ENCODE measurements at regions of chr15 and their contacts with region 1.

Region 1: GRCh38 chr15:35519541-35520149 is 26.3 kb downstream of the DPH6 start:
- DNase-seq: no peak
- H3K4me3 ChIP-seq: no peak overlapping the region
- H3K27ac ChIP-seq: no peak overlapping the region
- H3K4me1 ChIP-seq: no peaks in the 10 kb centered on the region
- H3K27me3 ChIP-seq: no peaks in the 10 kb centered on the region
- CTCF ChIP-seq: peak in 3 of 4 experiments; percentile 48 to 65 (median 61)
- POLR2A ChIP-seq: no peak

Region 2: GRCh38 chr15:35194296-35194695 is 325.3 kb before region 1 on chr15:
- intact Hi-C with region 1: no loop called
- DNase-seq: no peak
- H3K4me3 ChIP-seq: no peak overlapping the region
- H3K27ac ChIP-seq: no peak overlapping the region
- H3K4me1 ChIP-seq: no peaks in the 10 kb centered on the region
- H3K27me3 ChIP-seq: no peaks in the 10 kb centered on the region
- CTCF ChIP-seq: no peak
- POLR2A ChIP-seq: no peak

Region 3: GRCh38 chr15:35583863-35584528 is 64.4 kb after region 1 on chr15:
- intact Hi-C with region 1: no loop called
- DNase-seq: no peak
- H3K4me3 ChIP-seq: no peak overlapping the region
- H3K27ac ChIP-seq: no peak overlapping the region
- H3K4me1 ChIP-seq: no peaks in the 10 kb centered on the region
- H3K27me3 ChIP-seq: no peaks in the 10 kb centered on the region
- CTCF ChIP-seq: no peak
- POLR2A ChIP-seq: no peak

Region 4: GRCh38 chr15:37109872-37110572 is 1590.4 kb after region 1 on chr15:
- intact Hi-C with region 1: loop called (anchors 5 kb)
- DNase-seq: no peak
- H3K4me3 ChIP-seq: peak overlapping the region; percentile 21 to 31
- H3K27ac ChIP-seq: peak overlapping the region; percentile 87 to 92
- H3K4me1 ChIP-seq: no peaks in the 10 kb centered on the region
- H3K27me3 ChIP-seq: no peaks in the 10 kb centered on the region
- CTCF ChIP-seq: no peak
- POLR2A ChIP-seq: no peak

Measured in prostate gland (tissue), 2 donors.